Activated CD8-positive, alpha-beta T cell treated with anti-CD3 and anti-CD28 coated beads for 36 hours (primary cell): ENCODE measurements at regions of chr14 and their contacts with region 1.

Region 1: DNA sequence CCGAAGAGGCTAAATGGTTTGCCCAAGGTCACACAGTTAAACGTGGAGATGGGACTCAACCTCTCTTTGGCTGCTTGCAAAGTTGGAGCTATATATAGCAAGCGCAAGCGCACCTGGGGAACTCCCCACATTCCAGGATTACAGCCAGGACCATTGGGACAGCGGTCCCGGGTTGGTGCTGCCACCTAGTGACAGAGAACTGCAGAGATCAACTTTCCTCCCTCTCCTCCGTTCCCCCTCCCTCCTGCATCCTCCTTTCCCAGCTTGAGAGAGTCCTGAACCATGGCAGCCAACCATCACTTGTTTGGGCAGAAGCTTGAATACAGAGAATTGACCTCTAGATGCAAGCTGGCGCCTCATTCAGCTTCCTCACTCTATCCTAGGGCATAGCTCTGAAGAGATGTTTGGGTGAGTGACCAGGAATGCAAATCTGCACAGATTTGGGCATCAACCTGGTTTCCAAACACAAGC is 17.4 kb upstream of the FLVCR2 start:
- DNase-seq: peak; percentile 49
- ATAC-seq: no peak
- H3K4me3 Mint-ChIP-seq: peak overlapping the region; percentile 20
- H3K27ac Mint-ChIP-seq: peak overlapping the region; percentile 32
- H3K4me1 Mint-ChIP-seq: peaks cover 67% of the 10 kb centered on the region
- H3K27me3 Mint-ChIP-seq: no peaks in the 10 kb centered on the region
- CTCF ChIP-seq: peak; percentile 78

Region 2: GRCh38 chr14:75307700-75308379 is 253.2 kb before region 1 on chr14:
- CTCF ChIA-PET with region 1: interaction called, 11 read pairs
- POLR2A ChIA-PET with region 1: no interaction called
- intact Hi-C with region 1: loop called (anchors 10 kb)
- DNase-seq: peak; percentile 82
- ATAC-seq: peak; percentile 62
- H3K4me3 Mint-ChIP-seq: no peak overlapping the region
- H3K27ac Mint-ChIP-seq: no peak overlapping the region
- H3K4me1 Mint-ChIP-seq: peaks cover 13% of the 10 kb centered on the region
- H3K27me3 Mint-ChIP-seq: peaks cover 1% of the 10 kb centered on the region
- CTCF ChIP-seq: peak; percentile 97

Region 3: GRCh38 chr14:75497191-75497590 is 63.8 kb before region 1 on chr14:
- CTCF ChIA-PET with region 1: interaction called, 38 read pairs
- POLR2A ChIA-PET with region 1: interaction called, 16 read pairs
- intact Hi-C with region 1: loop called (anchors 5 kb)
- DNase-seq: peak; percentile 75
- ATAC-seq: peak; percentile 83
- H3K4me3 Mint-ChIP-seq: peak overlapping the region; percentile 14
- H3K27ac Mint-ChIP-seq: peak overlapping the region; percentile 80
- H3K4me1 Mint-ChIP-seq: peaks cover 59% of the 10 kb centered on the region
- H3K27me3 Mint-ChIP-seq: no peaks in the 10 kb centered on the region
- CTCF ChIP-seq: no peak

Region 4: DNA sequence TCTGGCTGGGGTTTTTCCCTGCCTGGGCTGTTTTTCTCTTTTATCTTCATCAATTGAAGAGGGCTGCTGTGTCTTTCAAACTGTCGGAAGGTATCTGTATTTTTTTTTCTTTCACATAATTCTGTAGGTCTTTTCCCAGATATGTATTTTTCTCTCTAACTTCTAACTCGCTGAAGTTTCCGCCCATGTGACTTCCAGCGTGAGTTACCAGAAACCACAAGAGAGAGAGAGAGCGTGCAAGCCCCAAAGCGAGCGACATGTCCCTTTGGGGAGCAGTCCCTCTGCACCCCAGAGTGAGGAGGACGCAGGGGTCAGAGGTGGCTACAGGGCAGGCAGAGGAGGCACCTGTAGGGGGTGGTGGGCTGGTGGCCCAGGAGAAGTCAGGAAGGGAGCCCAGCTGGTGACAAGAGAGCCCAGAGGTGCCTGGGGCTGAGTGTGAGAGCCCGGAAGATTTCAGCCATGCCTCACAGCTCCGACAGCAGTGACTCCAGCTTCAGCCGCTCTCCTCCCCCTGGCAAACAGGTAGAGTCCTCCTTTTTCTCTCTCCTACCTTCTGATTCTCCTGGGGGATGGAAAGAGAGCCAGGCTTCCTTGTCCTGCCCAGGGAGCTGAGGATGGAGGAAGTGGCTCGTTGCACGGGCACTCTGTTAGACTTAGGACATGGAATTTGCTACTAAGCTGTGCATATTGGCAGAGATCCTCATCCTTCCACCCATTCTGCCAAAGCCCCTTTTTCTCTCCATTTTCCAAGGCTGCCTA is 38.6 kb before region 1 on chr14 and contains the start of gene BATF:
- CTCF ChIA-PET with region 1: interaction called, 87 read pairs
- POLR2A ChIA-PET with region 1: interaction called, 12 read pairs
- intact Hi-C with region 1: loop called (anchors 1 kb)
- DNase-seq: peak; percentile 84
- ATAC-seq: peak; percentile 64
- H3K4me3 Mint-ChIP-seq: peak within 1 kb of the TSS; percentile 90
- H3K27ac Mint-ChIP-seq: peak within 1 kb of the TSS; percentile 98
- H3K4me1 Mint-ChIP-seq: peaks cover 59% of the 10 kb centered on the region
- H3K27me3 Mint-ChIP-seq: no peaks in the 10 kb centered on the region
- CTCF ChIP-seq: no peak
- total RNA-seq, gene BATF: 46.4 to 47.0 TPM

Region 5: GRCh38 chr14:75542588-75543091 is 18.4 kb before region 1 on chr14:
- CTCF ChIA-PET with region 1: interaction called, 17 read pairs
- POLR2A ChIA-PET with region 1: interaction called, 27 read pairs
- intact Hi-C with region 1: no loop called
- DNase-seq: peak; percentile 90
- ATAC-seq: peak; percentile 89
- H3K4me3 Mint-ChIP-seq: peak overlapping the region; percentile 54
- H3K27ac Mint-ChIP-seq: peak overlapping the region; percentile 96
- H3K4me1 Mint-ChIP-seq: peaks cover 57% of the 10 kb centered on the region
- H3K27me3 Mint-ChIP-seq: no peaks in the 10 kb centered on the region
- CTCF ChIP-seq: no peak

Region 6: GRCh38 chr14:75577729-75578101 is 16.7 kb after region 1 on chr14:
- CTCF ChIA-PET with region 1: interaction called, 38 read pairs
- POLR2A ChIA-PET with region 1: interaction called, 6 read pairs
- intact Hi-C with region 1: no loop called
- DNase-seq: peak; percentile 88
- ATAC-seq: peak; percentile 93
- H3K4me3 Mint-ChIP-seq: peak overlapping the region; percentile 77
- H3K27ac Mint-ChIP-seq: peak overlapping the region; percentile 59
- H3K4me1 Mint-ChIP-seq: peaks cover 20% of the 10 kb centered on the region
- H3K27me3 Mint-ChIP-seq: peaks cover 3% of the 10 kb centered on the region
- CTCF ChIP-seq: peak; percentile 66

Region 7: GRCh38 chr14:75926431-75927115 is 365.6 kb after region 1 on chr14:
- CTCF ChIA-PET with region 1: no interaction called
- POLR2A ChIA-PET with region 1: no interaction called
- intact Hi-C with region 1: no loop called
- DNase-seq: no peak
- ATAC-seq: no peak
- H3K4me3 Mint-ChIP-seq: no peak overlapping the region
- H3K27ac Mint-ChIP-seq: no peak overlapping the region
- H3K4me1 Mint-ChIP-seq: no peaks in the 10 kb centered on the region
- H3K27me3 Mint-ChIP-seq: no peaks in the 10 kb centered on the region
- CTCF ChIP-seq: no peak